CD14-positive monocyte (primary cell): ENCODE measurements at regions of chr9 and their contacts with region 1.

Region 1: DNA sequence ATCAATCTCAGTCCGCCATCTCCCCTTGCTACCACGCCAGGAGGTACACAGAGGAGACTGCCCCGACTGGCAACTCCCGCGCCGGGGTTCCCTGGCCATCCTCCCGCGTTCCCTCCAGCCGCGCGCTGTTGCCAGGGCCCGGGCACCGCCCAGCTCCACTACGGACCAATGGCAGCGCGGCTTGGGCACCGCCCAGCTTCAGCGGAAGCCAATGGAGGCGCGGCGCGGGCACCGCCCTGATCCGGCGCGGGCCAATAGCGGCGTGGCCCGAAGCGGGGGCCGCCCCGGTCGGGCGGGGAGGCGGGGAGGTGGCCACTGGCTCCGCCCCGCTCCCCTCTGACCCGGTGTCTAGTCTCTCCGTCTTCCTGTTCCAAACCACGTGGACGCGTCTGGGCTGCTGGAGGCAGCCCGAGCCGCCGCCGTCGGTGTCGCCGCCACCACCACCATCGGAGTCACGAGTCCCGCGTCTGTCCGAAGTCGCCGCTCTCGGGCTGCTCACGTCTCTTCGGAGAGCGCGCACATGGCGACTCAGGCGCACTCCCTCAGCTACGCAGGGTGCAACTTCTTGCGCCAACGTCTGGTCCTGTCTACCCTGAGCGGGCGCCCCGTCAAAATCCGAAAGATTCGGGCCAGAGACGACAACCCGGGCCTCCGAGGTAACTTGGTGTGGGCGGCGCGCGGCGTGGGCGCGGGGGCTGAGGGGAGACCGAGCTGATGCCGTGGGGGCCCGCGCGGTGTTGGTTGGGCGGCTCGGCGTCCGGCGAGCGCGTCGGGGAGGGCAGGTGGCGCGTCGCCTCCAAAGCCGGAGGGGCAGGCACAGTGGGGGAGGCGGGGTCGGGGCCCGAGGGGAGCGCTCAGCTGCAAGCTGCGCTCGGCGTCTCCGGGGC is at the start of gene RCL1:
- DNase-seq: peak; percentile 94 to 97 (median 95)
- H3K4me3 ChIP-seq: peak within 1 kb of the TSS; percentile 74 to 82 (median 80)
- H3K4me3 Mint-ChIP-seq: peak within 1 kb of the TSS; percentile 92 to 95
- H3K27ac ChIP-seq: peak within 1 kb of the TSS; percentile 42 to 69
- H3K27ac Mint-ChIP-seq: peak within 1 kb of the TSS; percentile 67 to 90 (median 88)
- H3K4me1 ChIP-seq: peaks cover 20 to 26% of the 10 kb centered on the region in 2 donors
- H3K4me1 Mint-ChIP-seq: peaks cover 23% of the 10 kb centered on the region
- H3K27me3 ChIP-seq: peaks cover 8 to 15% of the 10 kb centered on the region in 2 donors
- H3K27me3 Mint-ChIP-seq: peaks cover 15 to 22% (median 20%) of the 10 kb centered on the region in 3 donors
- CTCF ChIP-seq: no peak
- polyA plus RNA-seq, gene RCL1: 2.2 to 3.0 (median 3.0) TPM

Region 2: DNA sequence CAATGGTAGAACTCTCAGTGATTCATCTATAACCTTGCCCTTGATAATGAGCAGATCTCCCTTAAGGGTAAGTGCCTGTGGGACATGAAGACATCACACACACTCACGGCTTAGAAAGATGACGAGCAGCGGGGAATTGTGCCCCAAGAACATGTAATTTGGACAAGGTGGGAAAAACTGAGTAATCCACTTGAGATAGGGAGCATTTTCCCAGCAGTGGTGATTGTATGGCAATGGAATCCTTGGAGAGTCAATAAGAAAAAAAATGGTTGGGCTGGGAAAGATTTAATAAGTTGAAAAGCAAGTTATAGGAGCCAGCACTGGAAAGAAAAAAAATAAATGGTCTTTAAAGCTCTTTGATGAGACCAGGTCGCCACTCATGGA is 686.1 kb before region 1 on chr9:
- intact Hi-C with region 1: no loop called
- DNase-seq: no peak
- H3K4me3 ChIP-seq: no peak overlapping the region
- H3K4me3 Mint-ChIP-seq: no peak overlapping the region
- H3K27ac ChIP-seq: no peak overlapping the region
- H3K27ac Mint-ChIP-seq: no peak overlapping the region
- H3K4me1 ChIP-seq: no peaks in the 10 kb centered on the region
- H3K4me1 Mint-ChIP-seq: no peaks in the 10 kb centered on the region
- H3K27me3 ChIP-seq: no peaks in the 10 kb centered on the region
- H3K27me3 Mint-ChIP-seq: peaks cover 0 to 4% (median 0%) of the 10 kb centered on the region in 3 donors
- CTCF ChIP-seq: no peak

Region 3: DNA sequence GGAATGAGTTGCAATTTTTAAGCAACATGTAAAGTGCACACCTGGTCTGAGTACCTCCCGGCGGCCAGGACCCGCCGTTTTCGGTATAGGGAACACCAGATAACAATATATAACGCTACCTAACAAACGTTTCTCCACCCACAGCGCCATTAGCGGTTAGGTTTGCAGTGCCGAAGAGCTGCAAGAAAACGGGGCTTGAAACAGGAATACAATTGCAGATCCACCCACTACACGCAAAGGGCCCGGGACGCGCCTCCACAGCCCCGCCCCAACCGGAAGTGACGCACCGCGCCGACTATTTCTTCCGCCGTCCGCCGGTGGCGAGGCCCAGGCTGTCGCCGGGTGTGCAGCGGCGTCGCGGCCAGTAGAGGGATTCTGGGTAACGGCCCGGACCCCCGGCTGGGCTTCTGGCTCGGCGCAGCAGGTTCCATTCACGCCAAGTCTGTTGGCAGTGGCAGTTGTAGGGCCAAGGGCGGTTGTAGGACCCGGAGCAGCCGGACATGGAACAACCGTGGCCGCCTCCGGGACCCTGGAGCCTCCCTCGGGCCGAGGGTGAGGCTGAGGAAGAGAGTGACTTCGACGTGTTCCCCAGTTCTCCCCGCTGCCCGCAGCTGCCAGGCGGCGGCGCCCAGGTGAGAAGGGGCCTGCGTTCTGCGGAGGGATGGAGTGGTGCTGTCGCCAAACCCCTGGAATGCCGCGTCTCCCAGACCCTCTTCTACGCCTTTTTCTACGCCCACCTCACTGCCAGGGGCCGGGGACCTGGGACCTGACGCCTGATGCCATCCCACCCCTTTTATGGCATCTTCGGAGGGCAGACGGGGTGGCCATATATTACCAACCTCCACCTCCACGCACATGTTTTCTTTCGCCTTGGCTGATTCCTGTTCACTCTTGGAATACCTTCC is 113.3 kb before region 1 on chr9 and contains the start of gene CDC37L1:
- intact Hi-C with region 1: loop called (anchors 5 to 10 kb)
- DNase-seq: peak; percentile 93 to 96 (median 96)
- H3K4me3 ChIP-seq: peak within 1 kb of the TSS; percentile 66 to 80 (median 79)
- H3K4me3 Mint-ChIP-seq: no peak within 1 kb of the TSS
- H3K27ac ChIP-seq: peak within 1 kb of the TSS; percentile 90 to 95
- H3K27ac Mint-ChIP-seq: no peak within 1 kb of the TSS
- H3K4me1 ChIP-seq: peaks cover 21 to 28% of the 10 kb centered on the region in 2 donors
- H3K4me1 Mint-ChIP-seq: peaks cover 3% of the 10 kb centered on the region
- H3K27me3 ChIP-seq: no peaks in the 10 kb centered on the region
- H3K27me3 Mint-ChIP-seq: peaks cover 0 to 9% (median 1%) of the 10 kb centered on the region in 3 donors
- CTCF ChIP-seq: peak; percentile 81
- polyA plus RNA-seq, gene CDC37L1: 2.8 to 4.4 (median 2.8) TPM

Region 4: GRCh38 chr9:4740638-4741364 is 52.0 kb before region 1 on chr9 and contains the start of gene AK3:
- intact Hi-C with region 1: loop called in 1 of 2 experiments (anchors 10 kb)
- DNase-seq: peak; percentile 51 to 65 (median 57)
- H3K4me3 ChIP-seq: peak within 1 kb of the TSS; percentile 59 to 98 (median 89)
- H3K4me3 Mint-ChIP-seq: peak within 1 kb of the TSS; percentile 99
- H3K27ac ChIP-seq: peak within 1 kb of the TSS in 1 of 2 donors; percentile 45
- H3K27ac Mint-ChIP-seq: peak within 1 kb of the TSS; percentile 63 to 91 (median 72)
- H3K4me1 ChIP-seq: peaks cover 16 to 27% of the 10 kb centered on the region in 2 donors
- H3K4me1 Mint-ChIP-seq: peaks cover 27% of the 10 kb centered on the region
- H3K27me3 ChIP-seq: no peaks in the 10 kb centered on the region
- H3K27me3 Mint-ChIP-seq: peaks cover 2 to 3% (median 2%) of the 10 kb centered on the region in 3 donors
- CTCF ChIP-seq: no peak
- polyA plus RNA-seq, gene AK3: 3.7 to 14.5 (median 13.8) TPM

Region 5: GRCh38 chr9:4762108-4762885 is 30.5 kb before region 1 on chr9:
- intact Hi-C with region 1: loop called (anchors 2 to 5 kb)
- DNase-seq: peak; percentile 27 to 61 (median 61)
- H3K4me3 ChIP-seq: peak overlapping the region; percentile 25 to 74 (median 41)
- H3K4me3 Mint-ChIP-seq: peak overlapping the region; percentile 73 to 88
- H3K27ac ChIP-seq: peak overlapping the region; percentile 52 to 64
- H3K27ac Mint-ChIP-seq: peak overlapping the region; percentile 87 to 97 (median 96)
- H3K4me1 ChIP-seq: peaks cover 50 to 51% of the 10 kb centered on the region in 2 donors
- H3K4me1 Mint-ChIP-seq: peaks cover 51% of the 10 kb centered on the region
- H3K27me3 ChIP-seq: peaks cover 0 to 6% of the 10 kb centered on the region in 2 donors
- H3K27me3 Mint-ChIP-seq: peaks cover 15 to 28% (median 16%) of the 10 kb centered on the region in 3 donors
- CTCF ChIP-seq: peak; percentile 80

Region 6: DNA sequence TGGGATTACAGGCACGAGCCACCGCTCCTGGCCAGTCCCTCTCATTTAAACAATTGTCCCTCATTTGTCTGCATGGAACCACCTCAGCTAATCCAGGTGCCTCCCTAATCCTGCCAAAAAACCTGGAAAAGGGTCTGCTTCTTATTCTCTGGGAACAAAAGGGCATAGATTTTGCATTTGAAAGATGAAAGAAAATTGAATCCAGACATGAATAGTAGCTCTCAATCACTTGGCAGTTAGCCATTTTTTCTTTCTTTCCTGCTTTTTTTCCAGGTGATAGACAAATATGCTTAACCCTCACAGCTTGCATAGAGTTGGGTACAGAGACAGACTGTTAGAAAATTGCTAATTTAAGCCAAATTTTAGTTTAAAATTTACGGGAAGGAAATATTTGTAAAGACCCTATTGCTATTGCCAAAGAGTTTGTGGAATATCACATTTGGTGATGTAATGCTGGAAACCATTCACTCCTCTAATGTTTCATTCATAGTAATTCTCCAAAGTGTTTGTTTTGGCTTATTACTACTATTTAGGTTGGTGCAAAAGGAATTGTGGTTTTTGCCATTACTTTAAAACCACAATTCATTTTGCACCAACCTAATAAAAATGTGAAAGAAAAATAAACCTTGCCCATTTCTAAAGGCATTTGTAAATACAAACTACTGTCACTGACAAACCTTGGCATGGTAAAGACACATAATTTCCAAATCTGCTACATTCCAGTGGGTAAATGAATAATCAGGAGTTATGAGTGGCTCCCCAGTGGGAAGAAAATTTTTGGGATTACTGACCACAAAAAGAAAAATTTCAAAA is 111.7 kb after region 1 on chr9:
- intact Hi-C with region 1: no loop called
- DNase-seq: no peak
- H3K4me3 ChIP-seq: no peak overlapping the region
- H3K4me3 Mint-ChIP-seq: no peak overlapping the region
- H3K27ac ChIP-seq: no peak overlapping the region
- H3K27ac Mint-ChIP-seq: no peak overlapping the region
- H3K4me1 ChIP-seq: peaks cover 17 to 22% of the 10 kb centered on the region in 2 donors
- H3K4me1 Mint-ChIP-seq: peaks cover 26% of the 10 kb centered on the region
- H3K27me3 ChIP-seq: no peaks in the 10 kb centered on the region
- H3K27me3 Mint-ChIP-seq: no peaks in the 10 kb centered on the region
- CTCF ChIP-seq: no peak

Region 7: DNA sequence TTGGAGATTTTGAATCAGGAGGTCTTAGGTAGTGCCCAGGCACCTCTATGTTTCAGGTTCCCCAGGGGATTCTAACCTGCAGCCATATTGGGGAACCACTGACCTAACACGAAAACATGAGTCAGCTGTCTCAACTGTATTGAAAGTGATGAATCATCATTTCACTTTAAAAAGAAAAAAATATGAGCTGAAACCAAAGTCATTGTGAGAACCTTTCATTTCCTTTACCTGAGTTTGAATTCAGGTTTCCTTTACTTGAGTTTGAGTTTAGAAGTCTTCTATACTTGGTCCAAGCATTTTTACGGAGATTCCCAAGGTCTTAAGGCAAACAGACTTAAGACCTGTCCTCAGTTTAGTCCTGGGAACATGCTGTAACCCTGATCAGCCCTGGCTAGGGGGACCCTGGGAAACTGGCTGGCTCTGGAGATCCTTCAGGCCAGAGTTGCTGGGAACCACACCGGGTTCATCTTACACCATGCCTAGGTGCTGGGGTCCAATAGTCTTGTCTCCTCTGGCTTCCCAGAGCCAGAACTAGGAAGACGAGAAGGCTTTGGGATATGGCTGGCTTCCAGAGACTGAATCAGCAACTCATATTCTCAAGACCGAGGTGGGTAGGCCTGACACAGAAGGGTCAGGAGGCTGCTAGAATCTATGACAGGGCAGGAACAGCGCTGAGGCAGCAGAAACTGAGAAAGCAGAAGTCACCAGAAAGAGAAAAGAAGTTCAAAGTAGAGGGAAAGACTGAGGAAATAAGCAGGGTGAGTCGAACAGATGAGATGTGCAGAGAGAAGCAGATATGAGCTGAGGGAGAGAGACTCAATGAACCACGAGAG is 701.1 kb after region 1 on chr9:
- intact Hi-C with region 1: loop called in 1 of 2 experiments (anchors 10 kb)
- DNase-seq: peak; percentile 74 to 86 (median 75)
- H3K4me3 ChIP-seq: peak overlapping the region in 2 of 3 experiments; percentile 10 to 62
- H3K4me3 Mint-ChIP-seq: peak overlapping the region; percentile 20 to 69
- H3K27ac ChIP-seq: peak overlapping the region; percentile 88
- H3K27ac Mint-ChIP-seq: peak overlapping the region; percentile 81 to 93 (median 90)
- H3K4me1 ChIP-seq: peaks cover 29 to 31% of the 10 kb centered on the region in 2 donors
- H3K4me1 Mint-ChIP-seq: peaks cover 31% of the 10 kb centered on the region
- H3K27me3 ChIP-seq: no peaks in the 10 kb centered on the region
- H3K27me3 Mint-ChIP-seq: no peaks in the 10 kb centered on the region
- CTCF ChIP-seq: no peak